B cell (primary cell): ENCODE measurements at regions of chr9 and their contacts with region 1.

Region 1: GRCh38 chr9:38154501-38155421 is 85.7 kb upstream of the SHB start:
- DNase-seq: no peak
- ATAC-seq: no peak
- H3K4me3 ChIP-seq: no peak overlapping the region
- H3K4me3 Mint-ChIP-seq: no peak overlapping the region
- H3K27ac ChIP-seq: no peak overlapping the region
- H3K27ac Mint-ChIP-seq: no peak overlapping the region
- H3K4me1 ChIP-seq: no peaks in the 10 kb centered on the region
- H3K4me1 Mint-ChIP-seq: no peaks in the 10 kb centered on the region
- H3K27me3 ChIP-seq: no peaks in the 10 kb centered on the region
- H3K27me3 Mint-ChIP-seq: peaks cover 3% of the 10 kb centered on the region
- CTCF ChIP-seq: no peak

Region 2: GRCh38 chr9:38214432-38214831 is 59.7 kb after region 1 on chr9:
- CTCF ChIA-PET with region 1: no interaction called
- POLR2A ChIA-PET with region 1: no interaction called
- intact Hi-C with region 1: loop called (anchors 10 kb)
- DNase-seq: no peak
- ATAC-seq: no peak
- H3K4me3 ChIP-seq: no peak overlapping the region
- H3K4me3 Mint-ChIP-seq: no peak overlapping the region
- H3K27ac ChIP-seq: no peak overlapping the region
- H3K27ac Mint-ChIP-seq: no peak overlapping the region
- H3K4me1 ChIP-seq: no peaks in the 10 kb centered on the region
- H3K4me1 Mint-ChIP-seq: no peaks in the 10 kb centered on the region
- H3K27me3 ChIP-seq: peaks cover 0 to 3% (median 0%) of the 10 kb centered on the region in 4 experiments
- H3K27me3 Mint-ChIP-seq: peaks cover 29% of the 10 kb centered on the region
- CTCF ChIP-seq: no peak

Region 3: DNA sequence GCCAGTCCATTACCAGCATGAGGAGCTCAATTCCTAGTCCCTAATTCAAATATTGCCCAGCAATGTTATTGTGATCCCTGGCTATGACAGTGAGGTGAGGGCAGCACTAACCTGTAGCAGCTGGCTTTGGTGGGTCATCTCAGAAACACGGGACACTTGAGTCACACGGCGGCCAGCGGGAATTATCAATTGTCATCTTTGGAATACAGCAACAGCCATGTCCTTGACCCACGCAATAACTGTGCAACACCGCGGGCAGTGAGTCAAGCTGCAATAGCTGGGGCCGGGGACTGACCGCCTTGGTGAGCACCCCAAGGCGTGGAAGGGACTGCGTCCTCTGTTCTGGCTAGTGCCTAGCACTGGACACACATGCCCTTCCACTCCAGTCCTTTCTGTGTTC is 175.2 kb after region 1 on chr9:
- CTCF ChIA-PET with region 1: no interaction called
- POLR2A ChIA-PET with region 1: no interaction called
- intact Hi-C with region 1: no loop called
- DNase-seq: no peak
- ATAC-seq: no peak
- H3K4me3 ChIP-seq: no peak overlapping the region
- H3K4me3 Mint-ChIP-seq: no peak overlapping the region
- H3K27ac ChIP-seq: no peak overlapping the region
- H3K27ac Mint-ChIP-seq: no peak overlapping the region
- H3K4me1 ChIP-seq: no peaks in the 10 kb centered on the region
- H3K4me1 Mint-ChIP-seq: no peaks in the 10 kb centered on the region
- H3K27me3 ChIP-seq: no peaks in the 10 kb centered on the region
- H3K27me3 Mint-ChIP-seq: no peaks in the 10 kb centered on the region
- CTCF ChIP-seq: no peak